ENCODE measurements at regions of chr11 and their contacts with region 1.

Region 1: DNA sequence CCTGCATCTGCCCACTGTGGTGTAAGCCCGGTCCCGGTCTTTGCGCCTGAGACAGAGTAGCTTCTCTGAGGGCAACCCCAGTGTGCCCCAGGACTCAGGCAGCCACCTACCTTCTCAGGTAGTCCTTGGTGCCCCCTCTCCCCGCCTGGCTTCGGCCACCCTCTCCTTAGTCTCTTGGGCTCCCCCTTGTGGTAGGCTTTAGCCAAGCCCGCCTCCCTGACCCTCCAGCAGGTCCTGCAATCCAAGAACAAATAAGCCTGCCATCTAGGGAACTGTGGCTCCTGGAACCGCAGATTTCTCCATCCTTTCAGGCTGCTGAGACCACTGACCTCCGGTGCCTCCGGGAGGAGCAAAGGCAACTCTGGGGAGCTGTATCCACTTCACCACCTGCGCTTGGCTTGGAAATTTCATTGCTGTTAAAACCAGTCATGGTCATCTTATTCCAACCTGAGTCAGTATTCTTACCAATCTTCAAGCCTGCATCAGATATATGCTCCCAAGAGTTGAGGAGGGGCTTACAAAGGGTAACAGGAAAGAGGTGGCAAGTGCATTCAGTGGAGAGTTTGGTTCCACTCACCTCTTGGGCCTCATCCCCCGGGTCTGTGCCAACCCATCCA is 52.8 kb upstream of the TENM4 start:
- DNase-seq: peak; percentile 64 to 70
- ATAC-seq: peak; percentile 70 to 89 (median 84)
- H3K4me3 ChIP-seq: no peak overlapping the region
- H3K27ac ChIP-seq: no peak overlapping the region
- H3K4me1 ChIP-seq: peaks cover 0 to 5% (median 0%) of the 10 kb centered on the region in 9 donors
- H3K27me3 ChIP-seq: peaks cover 0 to 5% (median 0%) of the 10 kb centered on the region in 7 donors
- CTCF ChIP-seq: peak; percentile 62 to 91 (median 81)

Region 2: GRCh38 chr11:79400717-79401686 is 92.7 kb before region 1 on chr11:
- intact Hi-C with region 1: loop called in 2 of 10 experiments (anchors 10 kb)
- DNase-seq: peak; percentile 28 to 39
- ATAC-seq: peak in 4 of 8 donors; percentile 55 to 75 (median 57)
- H3K4me3 ChIP-seq: no peak overlapping the region
- H3K27ac ChIP-seq: no peak overlapping the region
- H3K4me1 ChIP-seq: no peaks in the 10 kb centered on the region
- H3K27me3 ChIP-seq: peaks cover 0 to 9% (median 0%) of the 10 kb centered on the region in 7 donors
- CTCF ChIP-seq: peak; percentile 14 to 69 (median 56)

Region 3: GRCh38 chr11:79678780-79679452 is 185.3 kb after region 1 on chr11:
- intact Hi-C with region 1: no loop called
- DNase-seq: no peak
- ATAC-seq: no peak
- H3K4me3 ChIP-seq: no peak overlapping the region
- H3K27ac ChIP-seq: no peak overlapping the region
- H3K4me1 ChIP-seq: no peaks in the 10 kb centered on the region
- H3K27me3 ChIP-seq: peaks cover 0 to 7% (median 0%) of the 10 kb centered on the region in 7 donors
- CTCF ChIP-seq: no peak